Activated naive CD4-positive, alpha-beta T cell treated with anti-CD3 and anti-CD28 coated beads for 36 hours (primary cell): ENCODE measurements at regions of chr6 and their contacts with region 1.

Region 1: GRCh38 chr6:90121982-90122381 is 174.7 kb downstream of the BACH2 start:
- DNase-seq: peak; percentile 82
- H3K4me3 Mint-ChIP-seq: no peak overlapping the region
- H3K27ac Mint-ChIP-seq: peak overlapping the region; percentile 88
- H3K4me1 Mint-ChIP-seq: peaks cover 89% of the 10 kb centered on the region
- H3K27me3 Mint-ChIP-seq: no peaks in the 10 kb centered on the region

Region 2: DNA sequence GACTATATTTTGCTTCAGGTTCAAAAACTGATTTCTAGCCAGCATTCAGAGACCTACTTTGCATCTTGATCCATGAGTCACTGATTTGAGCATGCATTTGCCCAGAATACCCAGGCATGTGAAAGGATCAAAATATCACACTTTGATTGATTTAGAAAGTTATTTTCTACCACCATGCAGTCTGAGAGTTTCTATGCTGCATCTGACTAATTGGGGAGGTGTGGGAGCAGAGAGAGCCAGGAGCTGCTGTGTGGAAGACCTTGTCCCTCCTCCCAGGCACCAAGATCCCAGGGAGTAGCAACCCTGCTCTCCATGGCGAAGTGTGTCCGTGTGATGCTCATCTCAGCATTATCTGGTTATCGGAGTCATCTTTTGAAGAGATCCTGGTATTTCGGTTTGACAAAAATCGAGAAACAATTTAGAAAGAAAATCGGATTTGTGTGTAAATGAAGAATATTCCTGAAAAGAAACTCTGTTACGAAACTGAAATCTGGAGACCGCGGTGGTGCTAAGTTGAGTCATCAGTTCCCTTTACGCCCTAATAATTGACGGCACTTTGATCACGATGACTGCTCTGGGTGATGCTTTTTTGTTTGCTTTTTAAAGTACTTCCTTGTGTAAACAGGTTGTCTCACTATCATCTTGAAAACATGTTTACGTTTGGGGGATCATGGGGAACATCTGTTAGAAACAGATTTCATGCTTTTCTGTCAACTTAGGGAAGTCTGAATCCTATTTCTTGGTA is 18.8 kb before region 1 on chr6:
- CTCF ChIA-PET with region 1: interaction called, 27 read pairs
- intact Hi-C with region 1: no loop called
- DNase-seq: peak; percentile 53
- H3K4me3 Mint-ChIP-seq: peak overlapping the region; percentile 45
- H3K27ac Mint-ChIP-seq: peak overlapping the region; percentile 79
- H3K4me1 Mint-ChIP-seq: peaks cover 93% of the 10 kb centered on the region
- H3K27me3 Mint-ChIP-seq: no peaks in the 10 kb centered on the region

Region 3: GRCh38 chr6:90110971-90111370 is 11.0 kb before region 1 on chr6:
- CTCF ChIA-PET with region 1: interaction called, 27 read pairs
- intact Hi-C with region 1: loop called (anchors 1 kb)
- DNase-seq: peak; percentile 65
- H3K4me3 Mint-ChIP-seq: peak overlapping the region; percentile 2
- H3K27ac Mint-ChIP-seq: peak overlapping the region; percentile 31
- H3K4me1 Mint-ChIP-seq: peaks cover 86% of the 10 kb centered on the region
- H3K27me3 Mint-ChIP-seq: no peaks in the 10 kb centered on the region

Region 4: GRCh38 chr6:90136837-90137568 is 15.0 kb after region 1 on chr6:
- CTCF ChIA-PET with region 1: interaction called, 5 read pairs
- intact Hi-C with region 1: loop called (anchors 1 kb)
- DNase-seq: no peak
- H3K4me3 Mint-ChIP-seq: no peak overlapping the region
- H3K27ac Mint-ChIP-seq: peak overlapping the region; percentile 50
- H3K4me1 Mint-ChIP-seq: peaks cover 75% of the 10 kb centered on the region
- H3K27me3 Mint-ChIP-seq: no peaks in the 10 kb centered on the region

Region 5: GRCh38 chr6:90179190-90180169 is 57.5 kb after region 1 on chr6:
- CTCF ChIA-PET with region 1: interaction called, 3 read pairs
- intact Hi-C with region 1: loop called (anchors 1 kb)
- DNase-seq: peak; percentile 56
- H3K4me3 Mint-ChIP-seq: no peak overlapping the region
- H3K27ac Mint-ChIP-seq: peak overlapping the region; percentile 85
- H3K4me1 Mint-ChIP-seq: peaks cover 81% of the 10 kb centered on the region
- H3K27me3 Mint-ChIP-seq: no peaks in the 10 kb centered on the region